Upper lobe of right lung (tissue), 1 donor: ENCODE measurements at regions of chr21 and their contacts with region 1.

Region 1: GRCh38 chr21:16473988-16474387 is 744.2 kb downstream of the USP25 start:
- DNase-seq: no peak
- ATAC-seq: no peak
- H3K4me3 ChIP-seq: no peak overlapping the region
- H3K27ac ChIP-seq: no peak overlapping the region
- H3K4me1 ChIP-seq: no peaks in the 10 kb centered on the region
- H3K27me3 ChIP-seq: no peaks in the 10 kb centered on the region
- CTCF ChIP-seq: no peak

Region 2: GRCh38 chr21:17003763-17004373 is 529.9 kb after region 1 on chr21:
- intact Hi-C with region 1: loop called (anchors 10 kb)
- DNase-seq: no peak
- ATAC-seq: no peak
- H3K4me3 ChIP-seq: peak overlapping the region; percentile 17
- H3K27ac ChIP-seq: no peak overlapping the region
- H3K4me1 ChIP-seq: no peaks in the 10 kb centered on the region
- H3K27me3 ChIP-seq: no peaks in the 10 kb centered on the region
- CTCF ChIP-seq: no peak

Region 3: GRCh38 chr21:18334066-18334465 is 1860.1 kb after region 1 on chr21:
- intact Hi-C with region 1: no loop called
- DNase-seq: no peak
- ATAC-seq: no peak
- H3K4me3 ChIP-seq: no peak overlapping the region
- H3K27ac ChIP-seq: no peak overlapping the region
- H3K4me1 ChIP-seq: no peaks in the 10 kb centered on the region
- H3K27me3 ChIP-seq: no peaks in the 10 kb centered on the region
- CTCF ChIP-seq: no peak